A549 (cell line): ENCODE measurements at regions of chr19 and their contacts with region 1.

Region 1: GRCh38 chr19:41951686-41952172 is 7.4 kb downstream of the RABAC1 start:
- DNase-seq: peak; percentile 87 to 99
- ATAC-seq: peak; percentile 86 to 95
- H3K4me3 ChIP-seq: no peak overlapping the region
- H3K27ac ChIP-seq: 0 out of 6 replicates have a peak overlapping the region, but pooled peaks of 1 of the 2 experiments have one; percentile 41
- H3K4me1 ChIP-seq: no peaks in the 10 kb centered on the region
- CTCF ChIP-seq: peak; percentile 99
- EP300 ChIP-seq: no peak
- POLR2A ChIP-seq: no peak
- RAD21 ChIP-seq: peak; percentile 92 to 97

Region 2: DNA sequence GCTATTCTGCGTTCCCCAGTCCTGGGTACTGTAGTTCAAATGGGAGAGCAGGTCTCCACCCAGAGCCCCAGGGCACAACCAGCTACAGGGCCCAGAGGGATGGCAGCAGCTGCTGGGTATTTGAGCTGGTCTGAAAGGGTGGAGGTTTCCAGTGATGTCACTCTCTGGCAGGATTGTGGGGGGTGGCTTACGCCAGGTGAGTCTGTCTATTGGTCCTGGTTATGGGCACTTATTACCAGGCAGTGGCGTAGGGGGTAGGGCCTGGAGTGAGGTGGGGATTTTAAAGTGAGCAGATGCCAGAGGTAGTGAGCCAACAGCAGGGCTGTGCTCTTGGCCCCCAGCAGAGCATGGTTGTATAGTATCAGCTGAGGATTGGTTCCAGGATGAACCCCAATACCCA is 85.4 kb before region 1 on chr19:
- CTCF ChIA-PET with region 1: interaction called, 87 read pairs
- POLR2A ChIA-PET with region 1: interaction called, 34 read pairs
- DNase-seq: no peak
- ATAC-seq: peak in 1 of 2 experiments; percentile 1; a peak in 3 of 6 replicates
- H3K4me3 ChIP-seq: no peak overlapping the region
- H3K27ac ChIP-seq: peak overlapping the region in 1 of 2 experiments; percentile 25; a peak in 2 of 6 replicates
- H3K4me1 ChIP-seq: peaks cover 91% of the 10 kb centered on the region
- CTCF ChIP-seq: no peak
- EP300 ChIP-seq: no peak
- POLR2A ChIP-seq: no peak
- RAD21 ChIP-seq: no peak

Region 3: GRCh38 chr19:41883821-41884733 is 67.7 kb before region 1 on chr19:
- CTCF ChIA-PET with region 1: interaction called, 11 read pairs
- POLR2A ChIA-PET with region 1: no interaction called
- DNase-seq: peak; percentile 100
- ATAC-seq: peak; percentile 78 to 97
- H3K4me3 ChIP-seq: peak overlapping the region; percentile 78
- H3K27ac ChIP-seq: peak overlapping the region; percentile 81 to 87
- H3K4me1 ChIP-seq: peaks cover 15% of the 10 kb centered on the region
- CTCF ChIP-seq: no peak; the same call in 2 of the 3 replicates
- EP300 ChIP-seq: peak in 1 of 2 experiments; percentile 53; a peak in 2 of 5 replicates
- POLR2A ChIP-seq: peak; percentile 73
- RAD21 ChIP-seq: no peak

Region 4: DNA sequence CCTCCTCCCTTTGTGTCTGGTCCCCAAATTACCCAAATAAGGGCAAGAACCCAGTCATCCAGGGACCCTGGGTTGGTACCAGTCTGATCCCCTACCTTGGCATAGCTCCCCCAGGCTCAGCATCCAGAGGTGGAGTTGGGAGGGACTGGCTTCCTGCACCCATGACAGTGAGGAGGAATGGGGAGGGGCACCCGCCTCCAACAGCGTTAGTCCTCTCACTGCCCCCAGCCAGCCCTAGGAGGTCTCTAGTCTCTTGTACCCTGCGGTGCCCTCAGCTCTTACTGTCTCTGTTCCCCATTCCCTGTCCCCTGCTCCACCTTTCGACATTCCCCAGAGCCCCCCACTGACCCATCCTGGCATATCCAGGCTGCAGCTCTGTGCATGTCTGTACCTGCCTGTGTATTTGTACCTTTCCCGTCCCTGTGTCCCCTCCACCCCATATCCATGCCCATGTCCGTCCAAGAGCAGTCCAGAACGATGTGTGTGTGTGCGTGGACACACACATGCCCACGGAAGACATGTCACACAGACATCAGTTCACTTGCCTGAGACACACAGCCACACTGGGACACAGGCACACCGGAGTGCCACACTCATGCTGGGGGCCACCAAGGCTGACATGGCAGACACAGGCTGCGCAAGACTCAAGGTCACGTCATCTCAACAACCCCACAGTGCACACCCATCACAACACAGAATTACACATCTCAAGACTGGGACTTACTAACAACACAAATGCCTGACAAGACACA is 41.3 kb before region 1 on chr19:
- CTCF ChIA-PET with region 1: interaction called, 28 read pairs
- POLR2A ChIA-PET with region 1: no interaction called
- DNase-seq: no peak
- ATAC-seq: peak in 1 of 2 experiments; percentile 0; a peak in 2 of 6 replicates
- H3K4me3 ChIP-seq: no peak overlapping the region
- H3K27ac ChIP-seq: no peak overlapping the region
- H3K4me1 ChIP-seq: peaks cover 35% of the 10 kb centered on the region
- CTCF ChIP-seq: no peak
- EP300 ChIP-seq: no peak
- POLR2A ChIP-seq: no peak
- RAD21 ChIP-seq: no peak

Region 5: GRCh38 chr19:41939861-41940730 is 11.6 kb before region 1 on chr19:
- CTCF ChIA-PET with region 1: interaction called, 163 read pairs
- POLR2A ChIA-PET with region 1: no interaction called
- DNase-seq: peak in 1 of 2 experiments; percentile 78
- ATAC-seq: peak in 1 of 2 experiments; percentile 12; a peak in 2 of 6 replicates
- H3K4me3 ChIP-seq: peak overlapping the region; percentile 56
- H3K27ac ChIP-seq: peak overlapping the region; percentile 74 to 90
- H3K4me1 ChIP-seq: peaks cover 9% of the 10 kb centered on the region; the same call in 1 of the 3 replicates
- CTCF ChIP-seq: no peak
- EP300 ChIP-seq: no peak
- POLR2A ChIP-seq: no peak
- RAD21 ChIP-seq: no peak

Region 6: DNA sequence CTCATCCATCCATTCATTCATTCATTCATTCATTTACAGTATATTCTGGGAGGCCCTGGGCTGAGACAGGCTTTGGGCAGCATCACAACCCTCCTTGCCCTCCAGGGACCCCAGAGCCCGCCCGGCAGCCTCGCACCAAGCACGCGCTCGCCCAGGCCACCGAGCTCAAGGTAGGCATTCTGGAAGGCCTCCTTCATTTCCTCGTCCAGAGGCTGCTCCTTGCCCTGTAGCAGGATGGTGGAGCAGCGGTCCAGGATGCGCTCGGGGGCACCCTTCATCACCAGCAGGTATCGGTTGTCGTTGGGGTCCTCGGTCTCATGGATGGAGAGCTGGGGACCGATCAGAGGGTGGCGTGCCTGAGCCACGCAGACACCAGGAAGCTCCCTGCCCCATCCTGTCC is 26.7 kb after region 1 on chr19:
- CTCF ChIA-PET with region 1: interaction called, 12 read pairs
- POLR2A ChIA-PET with region 1: no interaction called
- DNase-seq: no peak
- ATAC-seq: no peak
- H3K4me3 ChIP-seq: no peak overlapping the region
- H3K27ac ChIP-seq: no peak overlapping the region
- H3K4me1 ChIP-seq: no peaks in the 10 kb centered on the region
- CTCF ChIP-seq: no peak
- EP300 ChIP-seq: no peak
- POLR2A ChIP-seq: no peak
- RAD21 ChIP-seq: no peak